ENCODE measurements at regions of chr12 and their contacts with region 1.

Region 1: DNA sequence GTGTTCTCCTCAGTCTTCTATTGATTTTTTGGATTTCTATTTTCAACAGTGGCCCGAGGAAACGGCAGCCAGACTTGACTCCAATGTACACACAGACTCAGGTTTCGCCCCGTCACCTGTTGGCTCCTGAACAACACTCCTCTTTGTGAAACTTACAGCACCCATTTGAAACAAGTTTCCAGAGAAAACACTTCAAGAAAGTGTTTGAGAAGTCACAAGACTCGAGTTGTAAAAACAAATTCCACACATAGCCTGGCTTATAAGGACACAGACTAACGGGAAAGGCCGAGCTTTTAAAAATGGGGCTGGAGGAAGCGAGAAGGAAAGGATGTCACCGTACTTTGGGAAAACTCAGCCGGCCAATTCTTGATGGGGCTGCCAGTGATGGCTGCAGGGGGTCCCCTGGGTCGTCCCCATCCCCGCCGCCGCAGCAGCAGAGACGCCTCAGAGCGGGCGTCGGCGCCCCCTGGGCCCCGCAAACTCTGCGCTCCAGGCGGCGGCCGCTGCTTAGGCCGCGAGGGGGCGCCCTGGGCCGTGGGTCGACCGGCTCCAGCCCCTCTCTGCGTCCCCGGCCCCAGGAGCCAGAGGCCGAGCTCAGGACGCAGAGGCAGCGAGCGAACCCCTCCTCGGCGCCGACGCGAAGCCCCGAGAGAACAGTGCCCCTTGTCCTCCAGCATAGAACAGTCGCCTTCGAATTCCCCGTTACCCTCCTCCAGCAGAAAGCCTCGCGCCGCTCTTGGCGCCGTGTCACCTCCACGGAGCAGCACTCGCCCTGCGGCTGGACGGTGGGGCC is 106.9 kb downstream of the PRICKLE1 start:
- DNase-seq: peak in 1 of 2 experiments; percentile 76
- H3K4me3 ChIP-seq: peak overlapping the region; percentile 92
- H3K27ac ChIP-seq: no peak overlapping the region
- H3K4me1 ChIP-seq: peaks cover 8% of the 10 kb centered on the region; the same call in 1 of the 2 replicates
- H3K27me3 ChIP-seq: no peaks in the 10 kb centered on the region
- CTCF ChIP-seq: peak; percentile 85

Region 2: GRCh38 chr12:42308390-42308789 is 174.3 kb before region 1 on chr12:
- CTCF ChIA-PET with region 1: interaction called, 16 read pairs
- POLR2A ChIA-PET with region 1: no interaction called
- intact Hi-C with region 1: no loop called
- DNase-seq: no peak
- H3K4me3 ChIP-seq: no peak overlapping the region
- H3K27ac ChIP-seq: no peak overlapping the region
- H3K4me1 ChIP-seq: no peaks in the 10 kb centered on the region
- H3K27me3 ChIP-seq: no peaks in the 10 kb centered on the region
- CTCF ChIP-seq: no peak

Region 3: GRCh38 chr12:42568952-42569915 is 86.6 kb after region 1 on chr12:
- CTCF ChIA-PET with region 1: interaction called, 6 read pairs
- POLR2A ChIA-PET with region 1: interaction called, 10 read pairs
- intact Hi-C with region 1: loop called (anchors 1 kb)
- DNase-seq: peak in 1 of 2 experiments; percentile 47
- H3K4me3 ChIP-seq: no peak overlapping the region
- H3K27ac ChIP-seq: peak overlapping the region; percentile 61
- H3K4me1 ChIP-seq: peaks cover 15% of the 10 kb centered on the region
- H3K27me3 ChIP-seq: no peaks in the 10 kb centered on the region
- CTCF ChIP-seq: peak; percentile 65